ENCODE measurements at regions of chr4 and their contacts with region 1.

Region 1: GRCh38 chr4:2226261-2226660 is 15.7 kb downstream of the HAUS3 start:
- DNase-seq: no peak
- H3K4me3 Mint-ChIP-seq: no peak overlapping the region
- H3K27ac Mint-ChIP-seq: no peak overlapping the region
- H3K4me1 Mint-ChIP-seq: peaks cover 4% of the 10 kb centered on the region
- H3K27me3 Mint-ChIP-seq: no peaks in the 10 kb centered on the region

Region 2: DNA sequence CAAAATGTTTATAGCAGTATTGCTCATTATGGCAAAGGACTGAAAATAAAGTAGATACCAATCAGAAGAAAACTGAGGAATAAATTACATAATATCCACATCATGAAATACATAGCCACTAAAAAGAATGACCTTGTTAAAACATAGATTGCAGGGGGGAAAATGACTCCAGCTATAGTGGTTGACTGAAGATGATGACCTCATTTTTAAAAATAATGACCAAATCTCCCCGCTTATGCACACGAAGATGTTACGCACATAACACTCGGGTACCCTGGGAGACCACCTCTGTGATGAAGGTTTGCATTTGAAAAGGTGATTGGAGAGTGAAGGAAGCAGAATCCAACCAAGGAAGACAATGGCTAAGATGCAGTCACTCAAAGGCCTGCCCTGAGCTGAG is 11.2 kb before region 1 on chr4:
- CTCF ChIA-PET with region 1: interaction called, 10 read pairs
- POLR2A ChIA-PET with region 1: no interaction called
- DNase-seq: no peak
- H3K4me3 Mint-ChIP-seq: no peak overlapping the region
- H3K27ac Mint-ChIP-seq: no peak overlapping the region
- H3K4me1 Mint-ChIP-seq: peaks cover 9% of the 10 kb centered on the region
- H3K27me3 Mint-ChIP-seq: no peaks in the 10 kb centered on the region

Region 3: DNA sequence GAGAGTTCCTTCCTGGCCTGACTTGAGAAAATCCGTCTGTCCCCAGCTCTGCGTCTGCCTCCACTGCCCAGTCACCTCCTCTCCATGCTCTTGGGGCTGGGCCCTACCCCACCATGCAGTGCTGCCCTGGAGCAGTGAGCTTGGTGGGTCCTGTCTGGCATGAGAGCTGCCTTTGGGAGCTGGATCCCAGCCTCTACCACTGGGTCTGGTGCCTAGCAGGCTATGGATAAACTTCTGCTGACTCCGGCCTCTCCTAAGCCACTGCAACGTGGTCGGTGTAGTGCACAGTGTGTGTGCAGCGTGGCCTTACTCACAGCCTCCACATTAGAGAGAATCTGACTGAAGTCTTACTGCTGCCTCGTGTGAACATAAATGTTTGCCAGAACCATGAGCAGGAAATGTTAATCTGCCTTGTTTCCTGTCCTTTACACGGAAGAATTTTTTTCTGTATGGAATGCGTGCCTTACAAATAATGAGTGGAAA is 895.9 kb after region 1 on chr4:
- CTCF ChIA-PET with region 1: no interaction called
- POLR2A ChIA-PET with region 1: no interaction called
- DNase-seq: no peak
- H3K4me3 Mint-ChIP-seq: no peak overlapping the region
- H3K27ac Mint-ChIP-seq: peak overlapping the region; percentile 74
- H3K4me1 Mint-ChIP-seq: peaks cover 15% of the 10 kb centered on the region
- H3K27me3 Mint-ChIP-seq: no peaks in the 10 kb centered on the region

Measured in activated CD4-positive, alpha-beta T cell treated with anti-CD3 and anti-CD28 coated beads, Interleukin-2, amount 10 ng/mL, durations not matched to agents 7 days and 5 days (primary cell).